Activated CD8-positive, alpha-beta memory T cell treated with anti-CD3 and anti-CD28 coated beads, Interleukin-2, amount 10 ng/mL, durations not matched to agents 7 days and 5 days (primary cell): ENCODE measurements at regions of chr1 and their contacts with region 1.

Region 1: DNA sequence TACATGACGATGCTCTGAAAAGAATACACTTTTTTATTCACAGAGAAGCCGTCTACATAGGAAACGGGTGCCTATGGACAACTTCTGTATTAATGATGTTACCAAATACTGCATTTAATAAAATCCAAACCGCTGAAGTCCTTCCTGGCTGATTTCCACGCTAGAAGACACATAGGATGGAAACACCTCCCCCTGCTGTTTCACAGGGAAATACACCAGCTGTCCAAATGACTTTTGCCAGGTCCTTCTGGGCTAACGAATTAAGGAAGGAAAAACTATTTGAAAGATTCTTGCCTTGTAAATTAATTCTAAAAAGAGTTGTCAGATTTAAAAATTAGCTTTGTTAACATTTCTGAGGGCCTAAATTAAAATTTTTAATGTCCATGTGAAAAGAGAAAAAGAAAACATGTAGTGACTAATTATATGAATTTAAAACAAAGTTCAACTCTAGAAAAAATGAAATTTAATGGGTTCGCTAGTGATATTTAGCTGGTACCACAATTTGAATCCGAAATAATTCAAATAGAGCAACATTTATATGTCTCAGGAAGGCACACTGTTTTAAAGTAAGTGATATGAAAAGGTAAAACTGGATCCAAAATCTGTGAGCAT is 146.0 kb downstream of the RERE start:
- DNase-seq: no peak
- ATAC-seq: no peak
- H3K4me3 Mint-ChIP-seq: no peak overlapping the region
- H3K27ac Mint-ChIP-seq: no peak overlapping the region
- H3K4me1 Mint-ChIP-seq: peaks cover 33% of the 10 kb centered on the region
- H3K27me3 Mint-ChIP-seq: no peaks in the 10 kb centered on the region

Region 2: DNA sequence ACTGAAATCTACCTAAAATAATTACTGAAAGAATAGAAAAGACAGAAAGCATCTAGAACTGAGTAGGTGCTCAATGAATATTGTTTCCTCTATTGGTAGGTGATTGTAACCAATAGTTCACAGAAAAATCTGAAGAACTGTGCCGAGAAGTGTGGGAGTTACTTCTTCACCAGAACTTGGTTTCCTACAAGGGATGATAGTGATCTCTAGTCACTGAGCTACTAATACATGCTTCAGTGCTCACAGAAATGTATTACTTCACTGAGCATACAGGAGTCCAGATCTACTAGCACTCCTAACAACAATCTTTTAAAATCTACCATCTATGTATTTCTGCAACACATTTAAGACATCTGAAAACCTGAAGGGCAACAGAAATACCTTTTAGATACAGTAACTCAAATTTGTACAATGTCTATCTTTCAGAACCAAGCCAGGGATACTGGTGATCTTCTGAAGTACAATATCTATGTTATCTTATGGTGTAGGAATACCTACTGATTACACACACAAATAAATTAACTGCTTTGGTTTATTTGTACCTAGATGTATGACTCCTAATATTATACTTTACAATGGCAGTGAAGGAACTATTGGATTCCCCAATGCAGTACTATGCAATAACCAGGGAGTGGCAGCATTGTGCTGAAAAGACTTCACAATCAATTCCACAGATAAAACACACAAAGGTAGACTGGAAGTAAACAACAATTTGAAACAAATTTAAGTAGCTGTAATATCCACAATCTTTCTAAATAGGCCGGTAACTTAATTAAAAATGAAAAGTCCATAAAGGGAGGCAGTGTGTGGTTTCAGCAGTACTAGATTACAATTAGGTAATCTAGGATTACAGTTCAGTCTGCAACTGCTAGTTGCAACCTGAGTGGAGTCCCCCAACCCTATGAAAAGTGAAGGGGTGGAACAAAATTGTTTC is 110.5 kb before region 1 on chr1:
- CTCF ChIA-PET with region 1: interaction called, 46 read pairs
- DNase-seq: no peak
- ATAC-seq: peak; percentile 80
- H3K4me3 Mint-ChIP-seq: no peak overlapping the region
- H3K27ac Mint-ChIP-seq: peak overlapping the region; percentile 12
- H3K4me1 Mint-ChIP-seq: peaks cover 17% of the 10 kb centered on the region
- H3K27me3 Mint-ChIP-seq: no peaks in the 10 kb centered on the region

Region 3: DNA sequence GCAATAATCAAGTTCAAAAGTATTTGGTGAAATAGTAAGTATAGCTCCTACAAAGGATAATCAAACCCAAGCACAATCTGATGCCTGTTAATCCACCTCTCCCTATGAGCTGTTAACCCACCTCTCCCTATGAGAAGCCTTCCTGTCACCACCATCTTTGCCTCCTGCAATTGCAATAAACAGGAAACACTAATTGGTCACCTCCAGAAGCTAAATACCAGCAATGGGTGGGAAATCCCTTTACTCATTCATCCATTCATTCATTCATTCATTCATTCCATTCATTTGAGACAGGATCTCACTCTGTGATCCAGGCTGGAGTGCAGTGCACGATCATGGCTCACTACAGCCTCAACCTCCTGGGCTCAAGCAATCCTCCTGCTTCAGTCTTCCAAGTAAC is 13.2 kb after region 1 on chr1:
- CTCF ChIA-PET with region 1: interaction called, 22 read pairs
- DNase-seq: no peak
- ATAC-seq: no peak
- H3K4me3 Mint-ChIP-seq: no peak overlapping the region
- H3K27ac Mint-ChIP-seq: no peak overlapping the region
- H3K4me1 Mint-ChIP-seq: peaks cover 37% of the 10 kb centered on the region
- H3K27me3 Mint-ChIP-seq: no peaks in the 10 kb centered on the region

Region 4: GRCh38 chr1:8693107-8693506 is 21.7 kb after region 1 on chr1:
- CTCF ChIA-PET with region 1: interaction called, 17 read pairs
- DNase-seq: no peak
- ATAC-seq: no peak
- H3K4me3 Mint-ChIP-seq: no peak overlapping the region
- H3K27ac Mint-ChIP-seq: no peak overlapping the region
- H3K4me1 Mint-ChIP-seq: peaks cover 5% of the 10 kb centered on the region
- H3K27me3 Mint-ChIP-seq: no peaks in the 10 kb centered on the region

Region 5: DNA sequence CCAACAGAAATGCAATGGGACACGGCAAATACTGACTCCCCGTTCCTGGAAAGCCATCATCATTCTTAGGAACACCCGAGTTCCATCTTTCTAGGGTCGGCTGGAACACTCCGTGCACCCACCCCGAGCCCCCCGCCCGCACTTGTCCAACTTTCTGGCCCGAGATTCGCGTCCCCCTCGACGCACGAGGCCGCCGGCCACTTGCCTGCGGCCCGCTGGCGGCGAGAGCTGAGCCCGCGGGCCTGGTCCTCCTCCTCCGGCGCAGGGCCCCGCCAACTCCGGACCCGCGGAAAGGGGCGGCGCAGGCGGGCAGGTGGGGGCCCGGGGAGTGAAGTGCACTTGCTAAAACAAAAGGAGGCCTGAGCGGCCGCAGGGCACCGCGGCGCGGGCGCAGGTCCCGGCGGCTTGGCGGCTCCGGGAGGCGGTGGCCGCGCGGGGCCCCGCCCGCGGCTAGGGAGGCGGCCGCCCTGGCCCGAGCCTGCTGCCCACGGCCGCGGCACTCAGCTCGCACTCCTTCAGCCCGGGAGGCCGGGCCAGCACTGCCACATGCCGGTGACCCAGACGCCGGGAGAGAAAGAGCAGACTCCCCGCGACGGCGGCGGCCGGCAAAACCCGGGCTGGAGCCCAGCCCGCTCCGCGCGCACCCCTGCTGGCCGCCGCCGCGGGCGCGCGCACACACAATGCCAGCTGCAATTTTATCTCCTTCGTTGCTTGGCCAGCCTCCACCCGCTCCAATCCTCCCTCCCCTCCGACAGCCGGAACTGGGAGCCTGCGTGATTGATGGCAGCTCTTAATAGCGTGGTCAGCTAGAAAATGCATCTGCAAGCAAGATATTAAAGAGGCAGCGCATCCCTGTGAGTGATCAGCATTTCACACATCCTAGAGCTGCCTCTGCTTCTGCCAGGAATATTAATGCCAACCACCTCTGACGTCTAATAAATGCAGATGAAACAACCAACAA is 31.7 kb after region 1 on chr1:
- CTCF ChIA-PET with region 1: interaction called, 11 read pairs
- DNase-seq: peak; percentile 76
- ATAC-seq: peak; percentile 68
- H3K4me3 Mint-ChIP-seq: peak overlapping the region; percentile 70
- H3K27ac Mint-ChIP-seq: peak overlapping the region; percentile 67
- H3K4me1 Mint-ChIP-seq: peaks cover 35% of the 10 kb centered on the region
- H3K27me3 Mint-ChIP-seq: peaks cover 23% of the 10 kb centered on the region

Region 6: DNA sequence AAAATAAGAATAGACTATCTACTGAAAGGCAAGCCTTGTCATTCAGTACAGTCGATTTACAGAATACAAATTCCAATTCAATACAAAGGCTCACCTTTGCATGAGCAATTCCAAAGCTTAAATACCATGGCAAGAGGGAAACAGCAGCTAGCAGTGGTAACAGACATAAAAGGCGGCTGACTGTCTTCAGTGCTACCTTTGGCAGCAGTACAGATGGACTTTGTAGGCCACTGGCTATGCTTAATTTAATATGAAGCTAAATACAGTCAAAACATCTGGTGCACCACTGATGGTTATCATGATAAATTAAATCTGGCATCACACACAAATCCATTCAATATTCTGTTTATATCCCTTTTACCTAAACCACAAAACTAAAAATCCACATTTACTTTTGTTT is 83.6 kb after region 1 on chr1:
- CTCF ChIA-PET with region 1: no interaction called
- DNase-seq: no peak
- ATAC-seq: no peak
- H3K4me3 Mint-ChIP-seq: no peak overlapping the region
- H3K27ac Mint-ChIP-seq: no peak overlapping the region
- H3K4me1 Mint-ChIP-seq: peaks cover 6% of the 10 kb centered on the region
- H3K27me3 Mint-ChIP-seq: no peaks in the 10 kb centered on the region